Ascending aorta (tissue), 2 donors: ENCODE measurements at regions of chr4 and their contacts with region 1.

Region 1: DNA sequence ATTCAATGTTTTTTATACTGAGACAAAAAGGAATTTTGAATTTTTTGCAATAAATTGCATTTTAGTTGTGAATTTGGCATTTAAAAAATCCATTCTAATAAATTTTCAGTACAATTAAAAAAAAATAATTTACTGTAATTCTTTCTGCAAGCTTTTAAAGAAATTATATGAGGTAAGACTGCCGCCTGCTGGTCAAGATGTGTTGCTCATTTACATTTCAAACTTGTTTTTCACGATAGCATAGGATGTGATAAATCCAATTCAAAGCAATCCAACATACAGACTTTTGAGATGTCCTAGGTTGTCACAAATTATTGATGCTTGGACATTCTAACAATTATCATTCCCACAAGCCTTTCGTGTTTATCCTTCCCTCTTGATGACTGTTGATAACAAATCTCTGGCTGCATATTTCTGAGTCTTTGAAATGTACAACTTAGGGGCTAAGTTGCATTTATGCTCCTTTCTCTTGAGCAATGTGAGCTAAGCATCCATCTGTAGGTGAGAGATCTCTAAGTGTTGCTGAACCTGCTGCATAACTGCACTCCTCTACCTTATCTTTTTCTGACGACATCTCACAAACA is 21.7 kb upstream of the MFAP3L start:
- DNase-seq: peak in 1 of 2 donors; percentile 68
- H3K4me3 ChIP-seq: no peak overlapping the region
- H3K27ac ChIP-seq: no peak overlapping the region
- H3K4me1 ChIP-seq: no peaks in the 10 kb centered on the region
- H3K27me3 ChIP-seq: no peaks in the 10 kb centered on the region
- CTCF ChIP-seq: peak; percentile 65 to 74 (median 66)

Region 2: DNA sequence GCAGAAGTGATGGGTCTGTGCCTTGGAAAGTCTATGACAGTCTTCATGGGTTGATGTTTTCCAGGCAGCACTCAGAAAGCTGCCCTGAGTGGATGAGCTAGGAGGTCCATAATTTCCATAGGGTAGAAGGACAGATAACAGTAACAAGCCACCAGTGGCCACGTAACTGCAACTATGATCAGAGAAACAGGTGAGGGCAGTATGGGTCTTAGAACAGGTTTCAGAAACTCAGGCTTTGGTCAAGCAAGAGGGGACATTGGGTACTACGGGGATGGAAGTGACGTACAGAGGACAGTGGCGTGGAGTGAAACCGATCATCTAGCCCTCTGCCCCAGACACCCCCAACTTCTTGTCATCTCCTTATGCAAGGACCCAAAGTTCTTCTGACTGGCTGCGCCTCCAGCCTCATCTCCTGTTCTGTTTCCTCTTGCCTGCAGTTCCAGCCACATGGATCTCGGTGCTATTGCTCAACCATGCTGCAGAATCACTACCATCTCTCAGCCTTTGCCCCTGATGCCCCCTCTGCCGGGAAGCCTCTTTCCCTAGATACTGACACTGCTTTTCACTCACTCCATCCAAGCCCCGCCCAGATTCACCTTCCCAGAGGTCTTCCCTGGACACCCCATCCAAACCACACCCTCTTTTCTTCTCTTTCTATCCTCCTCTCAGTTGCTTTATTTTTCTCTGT is 145.1 kb before region 1 on chr4:
- intact Hi-C with region 1: loop called (anchors 1 kb)
- DNase-seq: no peak
- H3K4me3 ChIP-seq: no peak overlapping the region
- H3K27ac ChIP-seq: no peak overlapping the region
- H3K4me1 ChIP-seq: no peaks in the 10 kb centered on the region
- H3K27me3 ChIP-seq: no peaks in the 10 kb centered on the region
- CTCF ChIP-seq: peak in 2 of 3 experiments; percentile 28 to 47

Region 3: GRCh38 chr4:170079981-170080380 is 32.1 kb after region 1 on chr4:
- intact Hi-C with region 1: no loop called
- DNase-seq: no peak
- H3K4me3 ChIP-seq: no peak overlapping the region
- H3K27ac ChIP-seq: no peak overlapping the region
- H3K4me1 ChIP-seq: no peaks in the 10 kb centered on the region
- H3K27me3 ChIP-seq: no peaks in the 10 kb centered on the region
- CTCF ChIP-seq: no peak

Region 4: DNA sequence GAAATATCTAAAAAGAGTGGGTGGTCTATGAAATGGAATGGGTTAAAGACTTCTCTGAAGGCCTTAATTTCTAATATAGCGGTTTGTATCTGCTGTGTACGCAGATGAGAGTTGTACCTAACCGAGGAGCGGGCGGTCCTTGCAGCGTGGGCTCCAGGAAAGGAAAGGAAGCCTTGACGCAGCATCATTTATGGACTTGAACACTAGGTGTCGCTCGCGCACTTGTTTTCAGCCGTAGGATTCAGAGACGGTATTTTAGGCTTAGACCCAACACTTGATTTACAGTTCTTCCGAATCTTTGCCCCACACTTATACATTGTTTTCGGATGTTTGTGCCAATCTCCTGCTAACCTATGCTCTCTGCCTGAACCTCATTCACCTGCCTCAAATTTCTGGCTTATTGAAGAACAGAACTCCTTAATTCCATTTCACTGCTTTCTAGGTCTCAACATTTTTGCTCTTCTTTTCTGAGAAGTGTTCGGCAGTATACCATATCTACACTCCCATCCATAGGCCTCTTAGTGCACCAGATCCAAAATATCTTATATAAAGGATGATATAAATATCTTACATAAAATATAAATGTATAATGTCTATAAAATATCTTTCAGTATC is 90.8 kb after region 1 on chr4:
- intact Hi-C with region 1: no loop called
- DNase-seq: peak in 1 of 2 donors; percentile 81
- H3K4me3 ChIP-seq: peak overlapping the region in 1 of 2 donors; percentile 19
- H3K27ac ChIP-seq: no peak overlapping the region
- H3K4me1 ChIP-seq: no peaks in the 10 kb centered on the region
- H3K27me3 ChIP-seq: no peaks in the 10 kb centered on the region
- CTCF ChIP-seq: peak; percentile 31 to 81 (median 63)